ENCODE measurements at regions of chr15 and their contacts with region 1.

Region 1: GRCh38 chr15:42984493-42985034 is 64.0 kb upstream of the TTBK2 start:
- DNase-seq: no peak
- H3K4me3 ChIP-seq: no peak overlapping the region
- H3K27ac ChIP-seq: no peak overlapping the region
- H3K4me1 ChIP-seq: no peaks in the 10 kb centered on the region
- H3K27me3 ChIP-seq: no peaks in the 10 kb centered on the region
- CTCF ChIP-seq: no peak
- POLR2A ChIP-seq: no peak

Region 2: GRCh38 chr15:42964476-42964875 is 20.1 kb before region 1 on chr15:
- intact Hi-C with region 1: loop called (anchors 1 kb)
- DNase-seq: no peak
- H3K4me3 ChIP-seq: no peak overlapping the region
- H3K27ac ChIP-seq: no peak overlapping the region
- H3K4me1 ChIP-seq: no peaks in the 10 kb centered on the region
- H3K27me3 ChIP-seq: no peaks in the 10 kb centered on the region
- CTCF ChIP-seq: no peak
- POLR2A ChIP-seq: no peak